Caco-2 (cell line): ENCODE measurements at regions of chr12 and their contacts with region 1.

Region 1: GRCh38 chr12:40152783-40153383 is 47.0 kb upstream of the SLC2A13 start:
- DNase-seq: peak; percentile 41 to 57
- H3K4me3 ChIP-seq: no peak overlapping the region
- H3K4me3 Mint-ChIP-seq: no peak overlapping the region
- H3K27ac Mint-ChIP-seq: no peak overlapping the region
- H3K4me1 ChIP-seq: no peaks in the 10 kb centered on the region
- H3K4me1 Mint-ChIP-seq: no peaks in the 10 kb centered on the region
- H3K27me3 ChIP-seq: no peaks in the 10 kb centered on the region
- H3K27me3 Mint-ChIP-seq: no peaks in the 10 kb centered on the region
- CTCF ChIP-seq: peak; percentile 83 to 86

Region 2: GRCh38 chr12:39660101-39660500 is 492.8 kb before region 1 on chr12:
- CTCF ChIA-PET with region 1: no interaction called
- POLR2A ChIA-PET with region 1: no interaction called
- intact Hi-C with region 1: no loop called
- DNase-seq: no peak
- H3K4me3 ChIP-seq: no peak overlapping the region
- H3K4me3 Mint-ChIP-seq: no peak overlapping the region
- H3K27ac Mint-ChIP-seq: no peak overlapping the region
- H3K4me1 ChIP-seq: no peaks in the 10 kb centered on the region
- H3K4me1 Mint-ChIP-seq: no peaks in the 10 kb centered on the region
- H3K27me3 ChIP-seq: no peaks in the 10 kb centered on the region
- H3K27me3 Mint-ChIP-seq: peaks cover 14% of the 10 kb centered on the region
- CTCF ChIP-seq: no peak

Region 3: GRCh38 chr12:40045656-40046055 is 107.2 kb before region 1 on chr12:
- CTCF ChIA-PET with region 1: no interaction called
- POLR2A ChIA-PET with region 1: no interaction called
- intact Hi-C with region 1: no loop called
- DNase-seq: no peak
- H3K4me3 ChIP-seq: no peak overlapping the region
- H3K4me3 Mint-ChIP-seq: no peak overlapping the region
- H3K27ac Mint-ChIP-seq: no peak overlapping the region
- H3K4me1 ChIP-seq: no peaks in the 10 kb centered on the region
- H3K4me1 Mint-ChIP-seq: no peaks in the 10 kb centered on the region
- H3K27me3 ChIP-seq: no peaks in the 10 kb centered on the region
- H3K27me3 Mint-ChIP-seq: no peaks in the 10 kb centered on the region
- CTCF ChIP-seq: no peak

Region 4: DNA sequence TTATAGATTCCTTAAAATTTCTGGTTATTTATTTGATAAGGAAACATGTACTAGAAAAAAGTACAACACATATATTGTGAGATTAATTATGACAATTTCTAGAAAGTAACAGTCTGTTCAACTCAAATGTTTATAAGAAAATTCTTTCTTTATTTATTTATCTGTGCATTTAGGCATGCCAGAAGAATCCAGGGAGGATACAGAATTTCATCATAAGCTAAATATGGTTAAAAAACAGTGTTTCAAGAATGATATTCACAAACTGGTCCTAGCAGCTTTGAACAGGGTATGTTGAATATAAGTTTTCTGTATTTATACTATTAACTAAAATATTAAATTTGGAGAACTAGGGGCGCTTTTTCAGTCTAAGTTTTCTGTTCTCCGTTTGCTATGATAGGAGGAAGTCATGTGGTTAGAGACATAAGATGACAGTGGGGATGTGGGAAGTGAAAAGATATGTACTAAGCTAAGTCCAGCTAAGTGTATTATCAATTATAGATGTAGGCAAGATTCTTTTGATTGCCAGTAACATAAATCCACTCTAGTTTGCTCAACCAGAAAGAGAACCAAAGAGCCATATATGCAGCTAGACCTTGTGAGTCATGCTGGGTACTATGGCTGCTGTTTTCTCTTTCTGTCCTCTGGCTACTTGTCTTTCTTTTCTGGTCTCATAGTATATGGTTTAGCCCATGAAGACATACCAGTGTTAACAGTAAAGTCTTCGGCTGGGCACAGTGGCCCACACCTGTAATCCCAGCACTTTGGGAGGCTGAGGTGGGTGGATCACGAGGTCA is 110.9 kb after region 1 on chr12:
- CTCF ChIA-PET with region 1: no interaction called
- POLR2A ChIA-PET with region 1: no interaction called
- intact Hi-C with region 1: loop called (anchors 1 kb)
- DNase-seq: no peak
- H3K4me3 ChIP-seq: no peak overlapping the region
- H3K4me3 Mint-ChIP-seq: no peak overlapping the region
- H3K27ac Mint-ChIP-seq: no peak overlapping the region
- H3K4me1 ChIP-seq: no peaks in the 10 kb centered on the region
- H3K4me1 Mint-ChIP-seq: no peaks in the 10 kb centered on the region
- H3K27me3 ChIP-seq: no peaks in the 10 kb centered on the region
- H3K27me3 Mint-ChIP-seq: peaks cover 3% of the 10 kb centered on the region
- CTCF ChIP-seq: no peak